ENCODE measurements at regions of chr17 and their contacts with region 1.

Region 1: DNA sequence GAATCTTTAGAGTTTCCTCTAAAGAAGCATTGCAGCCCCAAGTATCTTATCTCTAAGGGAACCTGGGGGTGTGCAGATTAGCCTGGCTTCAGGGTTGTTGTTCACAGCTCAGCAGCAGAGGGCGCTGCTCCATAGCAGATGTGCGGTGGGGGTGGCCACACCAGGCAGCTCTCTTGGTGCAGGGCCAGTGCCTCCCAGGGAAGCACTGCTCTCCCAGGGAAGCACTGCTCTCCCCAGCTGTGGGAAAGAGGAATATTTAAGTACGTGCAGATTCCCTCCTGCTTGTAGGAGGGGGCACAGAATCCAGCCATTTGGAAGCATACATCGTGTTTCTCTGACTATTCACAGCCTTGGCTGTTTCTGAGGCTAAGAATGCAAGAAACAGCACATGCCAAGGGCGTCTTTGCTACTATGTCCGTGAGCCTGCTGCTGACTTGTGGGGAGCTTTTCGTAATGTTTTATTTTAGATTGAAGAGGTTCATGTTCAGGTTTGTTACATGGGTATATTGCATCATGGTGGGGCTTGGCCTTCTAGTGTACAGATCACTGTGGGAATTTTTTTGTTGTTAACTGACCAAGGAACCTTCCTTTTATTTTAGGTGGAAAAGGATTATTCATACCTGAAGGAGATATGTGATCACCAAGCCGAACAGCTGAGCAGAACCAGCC is 217.8 kb downstream of the SPECC1 start:
- DNase-seq: peak; percentile 85
- H3K4me3 ChIP-seq: no peak overlapping the region; a peak in 1 of 4 replicates
- H3K27ac ChIP-seq: no peak overlapping the region
- H3K4me1 ChIP-seq: peaks cover 0 to 3% of the 10 kb centered on the region in 2 experiments; a peak in 1 of 4 replicates
- H3K27me3 ChIP-seq: no peaks in the 10 kb centered on the region
- CTCF ChIP-seq: peak; percentile 88
- EP300 ChIP-seq: no peak
- RAD21 ChIP-seq: peak; percentile 98

Region 2: DNA sequence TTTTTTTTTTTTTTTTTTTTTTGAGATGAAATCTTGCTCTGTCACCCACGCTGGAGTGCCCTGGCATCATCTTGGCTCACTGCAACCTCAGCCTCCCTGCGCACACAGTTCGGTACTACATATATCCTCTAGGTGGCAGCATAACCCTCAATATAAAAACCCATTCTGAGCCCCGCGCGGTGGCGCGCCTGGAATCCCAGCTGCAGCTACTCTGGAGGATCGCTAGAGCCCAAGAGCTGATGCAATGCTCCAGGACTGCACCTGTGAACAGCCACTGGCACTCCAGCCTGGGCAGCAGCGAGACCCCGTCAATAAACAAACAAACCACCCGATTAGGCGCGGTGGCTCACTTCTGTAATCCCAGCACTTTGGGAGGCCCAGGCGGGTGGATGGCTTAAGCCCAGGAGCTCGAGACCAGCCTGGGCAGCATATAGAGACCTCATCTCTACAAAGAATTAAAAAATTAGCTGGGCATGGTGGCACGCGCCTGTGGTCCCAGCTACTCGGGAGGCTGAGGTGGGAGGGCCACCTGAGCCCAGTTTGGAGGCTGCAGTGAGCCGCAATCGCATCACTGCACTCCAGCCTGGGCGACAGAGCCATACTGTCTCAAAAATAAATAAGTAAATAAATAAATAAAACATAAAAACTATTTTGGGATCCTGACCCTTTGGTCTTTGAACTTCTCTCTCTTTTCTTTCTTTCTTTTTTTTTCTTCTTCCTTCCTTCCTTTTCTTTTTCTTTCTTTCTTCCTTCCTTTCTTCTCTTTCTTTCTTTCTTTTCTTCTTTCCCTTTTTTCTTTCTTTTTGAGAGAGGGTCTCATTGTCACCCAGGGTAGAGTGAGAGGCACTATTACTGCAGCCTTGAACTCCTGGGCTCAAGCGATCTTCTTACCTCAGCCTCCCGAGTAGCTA is 233.9 kb before region 1 on chr17:
- CTCF ChIA-PET with region 1: interaction called, 10 read pairs
- POLR2A ChIA-PET with region 1: no interaction called
- DNase-seq: peak; percentile 80
- H3K4me3 ChIP-seq: peak overlapping the region; percentile 9 to 40; a peak in 1 of 4 replicates
- H3K27ac ChIP-seq: no peak overlapping the region
- H3K4me1 ChIP-seq: no peaks in the 10 kb centered on the region
- H3K27me3 ChIP-seq: no peaks in the 10 kb centered on the region
- CTCF ChIP-seq: peak; percentile 72
- EP300 ChIP-seq: no peak
- RAD21 ChIP-seq: peak; percentile 93

Region 3: GRCh38 chr17:20216154-20216815 is 10.7 kb before region 1 on chr17:
- CTCF ChIA-PET with region 1: interaction called, 16 read pairs
- POLR2A ChIA-PET with region 1: no interaction called
- DNase-seq: no peak
- H3K4me3 ChIP-seq: no peak overlapping the region
- H3K27ac ChIP-seq: no peak overlapping the region
- H3K4me1 ChIP-seq: no peaks in the 10 kb centered on the region; a peak in 1 of 4 replicates
- H3K27me3 ChIP-seq: no peaks in the 10 kb centered on the region
- CTCF ChIP-seq: no peak
- EP300 ChIP-seq: no peak
- RAD21 ChIP-seq: no peak

Region 4: DNA sequence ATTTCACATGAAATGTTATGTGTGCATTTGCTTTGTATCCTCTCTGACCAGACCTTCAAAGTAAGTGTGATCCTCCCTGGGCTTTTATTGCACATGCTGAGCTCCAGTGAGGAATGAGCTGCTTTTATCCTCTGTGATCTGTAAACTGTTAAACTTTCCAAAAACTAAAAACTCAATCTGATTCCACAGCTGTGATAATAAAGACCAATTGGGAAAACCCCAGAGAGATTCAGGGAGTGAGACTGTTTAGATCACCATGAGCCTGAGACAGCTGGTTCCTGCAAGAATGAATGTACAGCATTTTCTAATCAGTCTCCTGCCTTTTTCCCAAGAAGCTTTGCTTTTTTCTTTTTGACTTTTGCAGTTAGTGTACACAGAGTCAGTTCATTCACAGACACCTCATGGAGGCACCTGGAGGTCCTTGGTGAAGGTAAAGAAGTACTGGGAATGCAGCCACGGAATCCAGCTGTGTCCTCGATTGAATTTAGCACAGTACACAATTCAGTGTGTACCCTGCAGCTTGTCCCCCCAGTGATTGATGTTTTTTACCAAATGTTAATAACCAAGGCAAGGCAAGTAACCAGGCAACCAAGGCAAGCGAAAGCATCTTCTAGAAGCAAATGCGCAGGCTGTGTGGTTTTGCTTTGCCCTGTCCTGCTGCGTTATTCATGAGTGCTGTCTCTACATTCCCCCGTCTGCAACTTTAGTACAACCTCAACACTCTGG is 57.8 kb after region 1 on chr17:
- CTCF ChIA-PET with region 1: interaction called, 14 read pairs
- POLR2A ChIA-PET with region 1: no interaction called
- DNase-seq: no peak
- H3K4me3 ChIP-seq: no peak overlapping the region
- H3K27ac ChIP-seq: no peak overlapping the region
- H3K4me1 ChIP-seq: peaks cover 0 to 14% of the 10 kb centered on the region in 2 experiments; a peak in 2 of 4 replicates
- H3K27me3 ChIP-seq: no peaks in the 10 kb centered on the region
- CTCF ChIP-seq: no peak
- EP300 ChIP-seq: no peak
- RAD21 ChIP-seq: no peak

Region 5: GRCh38 chr17:20315821-20316220 is 88.9 kb after region 1 on chr17:
- CTCF ChIA-PET with region 1: interaction called, 36 read pairs
- POLR2A ChIA-PET with region 1: no interaction called
- DNase-seq: no peak
- H3K4me3 ChIP-seq: no peak overlapping the region
- H3K27ac ChIP-seq: no peak overlapping the region
- H3K4me1 ChIP-seq: no peaks in the 10 kb centered on the region
- H3K27me3 ChIP-seq: no peaks in the 10 kb centered on the region
- CTCF ChIP-seq: no peak
- EP300 ChIP-seq: no peak
- RAD21 ChIP-seq: no peak

Measured in SK-N-SH (cell line).